Colonic mucosa (tissue), 4 donors: ENCODE measurements at regions of chr5 and their contacts with region 1.

Region 1: GRCh38 chr5:134411546-134412266 is at the start of gene CDKN2AIPNL:
- DNase-seq: peak; percentile 94
- H3K4me3 ChIP-seq: peak within 1 kb of the TSS; percentile 86
- H3K27ac ChIP-seq: peak within 1 kb of the TSS; percentile 30
- H3K4me1 ChIP-seq: peaks cover 8% of the 10 kb centered on the region
- H3K27me3 ChIP-seq: no peaks in the 10 kb centered on the region
- CTCF ChIP-seq: peak; percentile 55
- total RNA-seq, gene CDKN2AIPNL: 14.5 to 26.3 TPM

Region 2: GRCh38 chr5:134465816-134466240 is 54.1 kb after region 1 on chr5:
- intact Hi-C with region 1: loop called (anchors 10 kb)
- DNase-seq: peak; percentile 93
- H3K4me3 ChIP-seq: peak overlapping the region; percentile 42
- H3K27ac ChIP-seq: peak overlapping the region; percentile 99
- H3K4me1 ChIP-seq: peaks cover 16% of the 10 kb centered on the region
- H3K27me3 ChIP-seq: no peaks in the 10 kb centered on the region
- CTCF ChIP-seq: no peak

Region 3: DNA sequence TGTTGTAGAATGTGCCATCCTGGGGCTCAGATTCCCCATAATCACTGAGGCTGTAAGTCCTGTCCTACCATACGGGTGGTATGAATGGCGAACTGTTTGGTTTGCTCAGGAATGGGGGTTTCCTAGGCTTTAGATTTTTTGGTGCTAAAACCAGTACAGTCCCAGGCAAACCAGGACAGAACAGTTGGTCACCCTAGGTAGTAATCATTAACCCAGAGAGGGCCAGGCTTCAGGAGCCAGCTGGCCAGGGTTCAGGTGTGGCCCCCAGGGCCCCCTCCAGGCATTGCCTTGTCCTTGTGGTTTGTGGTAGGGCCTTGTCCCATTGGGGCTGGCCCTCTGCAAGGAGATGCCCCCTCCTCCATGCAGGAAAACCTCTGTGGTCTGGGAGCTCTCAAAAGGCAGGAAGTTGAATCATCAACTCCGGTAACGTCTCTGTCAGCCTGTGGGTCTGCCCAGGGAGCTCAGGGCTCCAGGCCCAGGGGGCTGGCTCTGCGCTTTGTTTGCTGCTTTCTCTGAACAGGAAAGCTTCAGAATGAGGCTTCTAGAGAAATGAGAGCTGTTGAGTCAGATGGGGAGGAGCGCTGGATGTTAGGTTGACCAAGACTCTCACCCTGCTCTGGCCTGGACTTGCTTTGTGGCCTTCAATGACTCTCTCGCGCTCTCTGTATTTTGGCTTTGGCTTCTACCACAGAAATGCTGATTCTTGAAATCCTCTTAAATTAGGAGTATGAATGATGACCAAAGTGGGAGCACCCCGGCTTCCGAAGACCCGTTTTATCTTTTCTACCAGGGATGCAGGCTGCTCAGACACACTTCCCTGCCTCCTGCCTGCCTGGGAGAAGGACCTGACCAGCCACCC is 91.6 kb after region 1 on chr5:
- intact Hi-C with region 1: loop called (anchors 5 kb)
- DNase-seq: peak; percentile 65
- H3K4me3 ChIP-seq: no peak overlapping the region
- H3K27ac ChIP-seq: peak overlapping the region; percentile 76
- H3K4me1 ChIP-seq: peaks cover 16% of the 10 kb centered on the region
- H3K27me3 ChIP-seq: no peaks in the 10 kb centered on the region
- CTCF ChIP-seq: no peak

Region 4: DNA sequence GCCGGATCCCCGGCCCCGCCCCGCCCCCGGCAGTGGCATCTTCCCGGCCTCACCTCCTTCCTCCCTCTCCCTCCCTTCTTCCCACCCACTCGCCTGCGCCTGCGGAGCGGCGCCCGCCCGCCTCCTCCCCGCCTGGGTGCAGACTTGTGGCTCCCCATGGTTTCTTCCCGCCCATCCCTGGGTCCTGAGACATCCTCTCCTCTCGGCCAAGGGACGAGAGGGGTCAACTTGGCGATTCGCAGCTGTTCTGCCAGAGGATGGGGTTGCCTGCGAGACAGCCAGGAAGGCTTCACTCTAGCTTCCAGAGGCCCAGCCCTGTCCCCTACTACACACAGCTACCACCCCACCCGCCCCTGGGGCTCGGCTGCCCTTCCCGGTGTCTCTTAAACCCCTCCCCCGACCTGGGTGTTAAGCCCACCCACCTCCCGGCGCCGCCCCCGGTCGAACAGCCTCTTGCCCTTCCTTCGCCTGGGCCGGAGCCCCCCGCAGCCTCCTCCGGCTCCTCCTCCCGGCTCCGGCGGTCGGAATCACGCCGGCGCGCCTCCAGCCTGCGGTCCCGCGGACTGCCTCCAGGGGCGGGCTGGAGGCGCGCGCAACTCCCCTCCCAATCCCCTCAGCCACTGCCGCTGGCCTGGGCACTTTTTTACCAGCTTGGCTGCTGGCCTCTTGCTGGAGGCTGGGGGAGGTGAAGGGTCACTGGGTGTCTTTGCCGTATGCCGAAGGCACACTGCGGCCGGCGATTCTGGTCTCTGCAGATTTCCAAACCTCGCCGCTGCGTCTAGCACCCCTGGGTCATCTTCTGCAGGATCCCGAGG is 115.6 kb after region 1 on chr5:
- intact Hi-C with region 1: loop called (anchors 5 kb)
- DNase-seq: peak; percentile 87
- H3K4me3 ChIP-seq: peak overlapping the region; percentile 93
- H3K27ac ChIP-seq: peak overlapping the region; percentile 91
- H3K4me1 ChIP-seq: peaks cover 11% of the 10 kb centered on the region
- H3K27me3 ChIP-seq: no peaks in the 10 kb centered on the region
- CTCF ChIP-seq: peak; percentile 69